Natural killer cell (primary cell): ENCODE measurements at regions of chr18 and their contacts with region 1.

Region 1: DNA sequence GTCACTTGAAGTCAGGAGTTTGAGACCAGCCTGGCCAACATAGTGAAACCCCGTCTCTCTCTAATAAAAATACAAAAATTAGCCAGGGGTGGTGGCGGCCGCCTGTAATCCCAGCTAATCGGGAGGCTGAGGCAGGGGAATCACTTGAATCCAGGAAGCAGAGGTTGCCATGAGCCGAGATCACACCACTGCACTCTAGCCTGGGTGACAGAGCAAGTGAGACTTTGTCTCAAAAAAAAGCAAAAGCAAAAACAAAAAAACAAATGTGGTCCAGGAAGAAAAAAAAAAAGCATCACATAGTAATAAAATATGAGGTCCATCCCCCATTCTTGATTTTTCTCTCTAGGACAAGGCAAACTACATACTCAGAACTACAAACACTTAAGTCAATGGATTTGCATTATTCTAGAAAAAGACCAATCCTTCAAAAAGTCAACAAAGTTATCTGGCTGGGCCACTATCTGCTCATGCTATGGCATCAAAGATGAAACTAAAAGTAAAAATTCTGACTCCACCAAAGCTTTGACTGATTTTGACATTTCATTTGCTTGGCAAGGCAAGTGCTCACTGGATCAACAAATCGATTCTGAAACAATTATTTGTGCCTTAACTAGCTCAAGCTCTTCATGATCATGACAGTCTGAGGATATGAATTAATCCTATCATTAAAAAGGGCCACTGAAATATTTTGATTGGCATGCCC is 28.4 kb downstream of the MEX3C start:
- DNase-seq: peak; percentile 37 to 38
- ATAC-seq: peak; percentile 63 to 75 (median 70)
- H3K4me3 ChIP-seq: no peak overlapping the region
- H3K4me3 Mint-ChIP-seq: peak overlapping the region; percentile 61
- H3K27ac ChIP-seq: peak overlapping the region; percentile 57
- H3K27ac Mint-ChIP-seq: peak overlapping the region; percentile 90 to 94
- H3K4me1 ChIP-seq: peaks cover 37% of the 10 kb centered on the region
- H3K4me1 Mint-ChIP-seq: peaks cover 79 to 83% of the 10 kb centered on the region in 2 donors
- H3K27me3 ChIP-seq: no peaks in the 10 kb centered on the region
- H3K27me3 Mint-ChIP-seq: no peaks in the 10 kb centered on the region
- CTCF ChIP-seq: no peak

Region 2: DNA sequence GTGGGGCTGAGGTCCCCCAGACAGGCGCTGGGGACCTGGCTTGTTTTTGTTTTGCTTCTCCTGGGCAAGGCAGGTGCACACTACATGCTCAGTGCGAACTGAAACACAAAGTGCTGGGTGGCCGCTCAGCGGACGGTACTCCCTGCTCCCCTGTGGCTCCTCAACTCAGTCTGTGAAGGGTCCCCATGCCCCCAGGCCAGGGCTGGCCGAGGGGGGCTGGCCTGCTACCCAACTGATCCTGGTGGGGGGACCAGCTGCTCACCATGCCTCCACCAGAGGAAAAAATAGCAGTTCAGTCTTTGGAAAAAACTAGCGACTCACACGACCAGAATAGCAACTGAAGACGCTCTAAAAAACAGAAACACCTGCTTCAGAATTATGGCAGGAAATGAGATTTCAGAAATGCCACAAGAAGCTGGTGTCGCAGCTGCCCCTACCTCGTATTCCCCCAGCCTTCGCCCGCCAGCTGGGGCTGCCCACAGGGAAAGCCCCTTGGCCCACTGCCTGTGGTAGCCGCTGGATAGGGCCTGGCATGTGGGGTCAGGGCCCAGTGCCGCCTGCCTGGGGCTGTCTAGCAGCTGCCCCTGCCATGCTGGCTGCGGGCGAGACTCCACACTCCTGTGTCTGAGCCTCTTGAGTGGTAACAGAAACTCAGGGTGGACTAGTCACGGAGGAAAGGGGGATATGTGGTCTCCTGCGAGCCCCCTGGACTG is 15.3 kb before region 1 on chr18:
- intact Hi-C with region 1: loop called (anchors 2 kb)
- DNase-seq: peak; percentile 73 to 74
- ATAC-seq: peak; percentile 63 to 80 (median 75)
- H3K4me3 ChIP-seq: peak overlapping the region; percentile 33
- H3K4me3 Mint-ChIP-seq: peak overlapping the region; percentile 81
- H3K27ac ChIP-seq: peak overlapping the region; percentile 92
- H3K27ac Mint-ChIP-seq: peak overlapping the region; percentile 97 to 99
- H3K4me1 ChIP-seq: peaks cover 59% of the 10 kb centered on the region
- H3K4me1 Mint-ChIP-seq: peaks cover 51 to 55% of the 10 kb centered on the region in 2 donors
- H3K27me3 ChIP-seq: no peaks in the 10 kb centered on the region
- H3K27me3 Mint-ChIP-seq: no peaks in the 10 kb centered on the region
- CTCF ChIP-seq: no peak

Region 3: DNA sequence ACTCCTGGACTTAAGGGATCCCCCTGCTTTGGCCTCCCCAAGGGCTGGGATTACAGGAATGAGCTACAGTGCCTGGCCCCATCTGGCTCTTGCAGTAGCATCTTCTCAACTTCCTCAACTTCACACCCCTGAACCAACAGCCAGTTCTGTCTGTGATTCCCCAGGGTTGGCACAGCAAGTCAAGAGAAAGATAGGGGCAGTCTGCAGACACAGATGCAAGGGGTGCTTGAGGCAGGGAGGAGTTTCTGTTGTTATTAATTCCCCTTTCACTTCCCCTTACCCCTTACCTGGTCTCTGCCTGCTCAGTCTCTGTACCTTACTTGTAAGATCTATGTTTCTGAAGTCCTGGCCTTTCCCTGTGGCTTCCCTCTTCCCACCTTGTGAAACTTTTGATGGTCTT is 82.5 kb after region 1 on chr18:
- intact Hi-C with region 1: no loop called
- DNase-seq: peak in 1 of 2 donors; percentile 3
- ATAC-seq: peak in 1 of 3 donors; percentile 18
- H3K4me3 ChIP-seq: no peak overlapping the region
- H3K4me3 Mint-ChIP-seq: no peak overlapping the region
- H3K27ac ChIP-seq: no peak overlapping the region
- H3K27ac Mint-ChIP-seq: no peak overlapping the region
- H3K4me1 ChIP-seq: no peaks in the 10 kb centered on the region
- H3K4me1 Mint-ChIP-seq: peaks cover 9 to 12% of the 10 kb centered on the region in 2 donors
- H3K27me3 ChIP-seq: no peaks in the 10 kb centered on the region
- H3K27me3 Mint-ChIP-seq: peaks cover 5 to 8% of the 10 kb centered on the region in 2 donors
- CTCF ChIP-seq: no peak